Mammary epithelial cell (primary cell): ENCODE measurements at regions of chr7 and their contacts with region 1.

Region 1: DNA sequence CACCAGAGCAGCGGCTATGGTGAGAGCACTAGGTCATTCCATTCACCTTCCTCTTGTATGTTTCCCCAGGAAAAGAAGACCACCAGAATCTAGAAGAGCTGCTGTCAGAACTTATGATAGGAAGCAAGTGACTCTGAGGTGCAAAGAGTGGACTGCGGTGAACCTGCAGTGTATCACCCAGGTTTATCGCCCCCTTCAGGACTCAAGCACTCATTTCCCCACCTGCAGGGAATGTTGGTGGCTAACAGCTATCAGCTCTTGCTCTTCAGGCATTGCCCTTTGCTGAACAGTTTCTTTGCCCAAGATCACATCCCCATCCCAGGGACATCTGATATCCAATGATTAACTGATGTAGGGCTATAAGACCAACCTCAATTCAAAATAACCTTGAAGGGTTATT is 66.3 kb upstream of the IL6 start:
- DNase-seq: no peak
- H3K4me3 ChIP-seq: no peak overlapping the region
- H3K27ac ChIP-seq: no peak overlapping the region
- H3K4me1 ChIP-seq: peaks cover 1% of the 10 kb centered on the region
- H3K27me3 ChIP-seq: no peaks in the 10 kb centered on the region
- CTCF ChIP-seq: peak in 1 of 2 donors; percentile 24

Region 2: DNA sequence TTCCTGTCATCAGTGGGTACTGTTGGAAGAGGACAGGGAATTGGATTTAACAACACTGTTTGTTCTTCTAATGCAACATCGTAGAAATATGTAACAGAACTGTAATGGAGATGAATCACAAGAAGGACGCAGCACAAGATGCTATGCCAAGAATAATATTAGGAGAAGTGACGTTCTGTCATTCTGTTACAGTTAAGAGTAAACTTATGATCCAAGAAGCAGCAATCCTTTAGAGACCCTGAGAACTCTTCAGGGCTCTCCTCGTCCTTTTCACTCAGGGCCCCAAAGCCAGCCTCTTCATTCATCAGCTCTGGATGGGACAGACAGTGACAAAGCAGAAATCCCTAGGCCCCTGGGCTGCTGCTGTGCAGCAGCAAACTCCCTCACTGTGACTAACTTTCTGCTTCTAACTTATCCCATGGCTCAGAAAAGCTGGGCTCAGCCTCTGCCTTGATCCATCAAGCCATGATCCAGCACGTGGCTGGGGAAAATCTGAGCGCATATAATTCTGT is 57.5 kb after region 1 on chr7:
- CTCF ChIA-PET with region 1: no interaction called
- dilution Hi-C with region 1: loop called (anchors 10 kb)
- in situ Hi-C with region 1: no loop called
- intact Hi-C with region 1: no loop called
- DNase-seq: peak; percentile 83
- H3K4me3 ChIP-seq: no peak overlapping the region
- H3K27ac ChIP-seq: no peak overlapping the region
- H3K4me1 ChIP-seq: peaks cover 17% of the 10 kb centered on the region
- H3K27me3 ChIP-seq: no peaks in the 10 kb centered on the region
- CTCF ChIP-seq: no peak

Region 3: GRCh38 chr7:22765609-22766008 is 104.9 kb after region 1 on chr7:
- CTCF ChIA-PET with region 1: no interaction called
- dilution Hi-C with region 1: no loop called
- in situ Hi-C with region 1: no loop called
- intact Hi-C with region 1: no loop called
- DNase-seq: no peak
- H3K4me3 ChIP-seq: no peak overlapping the region
- H3K27ac ChIP-seq: no peak overlapping the region
- H3K4me1 ChIP-seq: no peaks in the 10 kb centered on the region
- H3K27me3 ChIP-seq: no peaks in the 10 kb centered on the region
- CTCF ChIP-seq: no peak

Region 4: DNA sequence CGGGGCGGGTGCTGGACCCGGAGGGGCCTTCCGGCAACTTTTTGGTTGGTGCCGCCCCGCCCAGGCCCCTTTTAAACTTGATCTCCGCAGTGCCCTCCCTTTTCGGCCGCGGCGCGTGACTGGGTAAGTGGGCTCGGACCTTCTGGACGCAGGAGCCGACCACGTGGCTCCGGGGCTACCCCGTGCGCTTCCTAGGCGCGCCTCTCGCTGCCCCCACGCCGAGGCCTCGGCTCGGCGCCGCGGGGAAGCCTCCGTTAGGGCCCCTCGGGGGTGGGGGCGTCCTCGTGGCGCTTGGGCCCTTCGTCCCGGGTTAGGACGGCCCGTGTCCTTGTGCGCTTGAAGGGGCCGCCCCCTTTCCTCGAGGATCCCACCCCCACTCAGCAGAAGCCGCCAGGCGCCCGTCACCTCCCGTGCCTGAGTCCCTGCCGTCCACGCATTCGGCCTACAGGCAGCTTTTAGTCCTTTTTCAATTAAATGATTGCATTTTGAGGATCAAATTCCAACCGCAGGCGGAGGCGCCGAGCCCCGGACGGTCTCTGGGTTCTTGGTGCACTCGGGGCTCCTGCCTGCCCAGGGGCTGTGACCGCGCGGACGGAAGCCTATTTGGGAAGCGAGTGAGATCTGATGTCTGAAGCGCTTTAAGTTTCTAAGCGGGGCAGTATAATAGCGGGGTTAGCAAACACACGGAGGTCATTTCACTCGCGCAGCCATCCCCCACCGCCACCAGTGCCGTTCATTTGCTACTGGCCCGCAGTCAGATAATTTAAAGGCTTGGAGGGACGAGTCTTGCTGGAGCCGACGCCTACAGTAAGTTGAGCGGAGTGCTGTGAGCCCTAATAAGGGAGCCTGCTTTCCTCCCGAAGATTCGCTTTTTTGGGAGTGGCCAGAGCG is 193.7 kb after region 1 on chr7:
- CTCF ChIA-PET with region 1: no interaction called
- dilution Hi-C with region 1: no loop called
- in situ Hi-C with region 1: no loop called
- intact Hi-C with region 1: loop called (anchors 10 kb)
- DNase-seq: peak; percentile 73
- H3K4me3 ChIP-seq: peak overlapping the region; percentile 64 to 77 (median 75)
- H3K27ac ChIP-seq: peak overlapping the region; percentile 99
- H3K4me1 ChIP-seq: peaks cover 39% of the 10 kb centered on the region
- H3K27me3 ChIP-seq: no peaks in the 10 kb centered on the region
- CTCF ChIP-seq: no peak